Activated naive CD4-positive, alpha-beta T cell treated with anti-CD3 and anti-CD28 coated beads, Interleukin-2, amount 10 ng/mL, durations not matched to agents 7 days and 5 days (primary cell): ENCODE measurements at regions of chr2 and their contacts with region 1.

Region 1: DNA sequence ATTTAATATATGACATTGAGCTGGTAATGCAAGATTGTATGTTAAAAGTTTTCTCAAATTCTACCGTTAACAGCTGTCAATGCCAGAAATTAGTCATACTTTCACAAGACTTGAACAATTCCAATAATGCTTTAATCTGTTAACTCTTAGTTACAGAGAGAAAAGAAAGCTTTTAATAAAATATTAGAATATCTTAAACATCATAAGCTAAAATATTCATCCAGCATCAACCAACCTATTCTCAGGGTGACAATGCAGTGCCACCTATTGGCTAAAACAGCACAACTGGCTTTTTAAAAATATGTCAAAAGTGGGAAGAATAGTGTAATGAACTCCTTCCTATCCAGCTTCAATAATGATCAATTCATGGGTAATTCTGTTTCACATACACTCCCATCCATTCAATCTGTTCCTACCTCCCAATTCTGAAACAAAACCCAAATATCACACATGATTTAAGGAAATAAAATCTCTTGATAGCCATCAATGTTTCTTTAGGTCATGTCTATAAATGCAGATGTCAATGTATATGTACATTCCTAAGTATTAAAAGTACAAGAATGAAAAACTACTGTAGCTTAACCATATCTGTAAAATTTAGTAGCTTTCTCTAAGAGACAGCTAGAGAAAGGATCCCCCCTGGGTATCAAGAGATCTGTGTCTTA is 79.8 kb upstream of the CCDC141 start:
- DNase-seq: peak; percentile 39
- H3K4me3 Mint-ChIP-seq: no peak overlapping the region
- H3K27ac Mint-ChIP-seq: no peak overlapping the region
- H3K4me1 Mint-ChIP-seq: no peaks in the 10 kb centered on the region
- H3K27me3 Mint-ChIP-seq: no peaks in the 10 kb centered on the region

Region 2: DNA sequence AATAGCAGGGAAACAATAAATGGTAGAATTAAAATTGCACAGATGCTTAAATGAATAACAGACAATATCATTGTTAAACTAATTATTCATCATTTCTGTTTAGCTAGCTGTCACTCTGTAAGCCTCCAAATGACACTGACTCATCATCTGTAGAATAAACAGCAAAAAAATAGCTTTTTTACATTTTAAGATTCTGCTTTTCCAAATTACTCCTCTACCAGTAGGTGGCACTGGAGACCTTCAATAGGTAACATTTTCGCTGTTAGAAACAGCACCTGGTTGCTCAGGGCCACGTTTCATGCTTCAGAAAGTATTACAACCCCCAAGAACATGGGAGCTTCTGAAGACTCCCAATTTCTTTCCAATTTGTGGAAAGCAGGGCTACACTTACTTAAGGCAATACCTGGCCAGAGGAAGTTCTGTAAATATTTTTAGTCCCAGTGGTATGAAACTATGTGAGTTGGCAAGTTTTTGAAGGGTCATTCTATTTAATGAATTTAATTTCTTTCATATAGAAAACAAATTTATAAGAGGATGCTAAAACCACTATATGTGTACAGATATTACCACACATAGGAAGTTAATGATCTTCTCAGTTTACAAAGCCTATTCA is 367.8 kb before region 1 on chr2:
- CTCF ChIA-PET with region 1: interaction called, 16 read pairs
- DNase-seq: peak; percentile 47
- H3K4me3 Mint-ChIP-seq: no peak overlapping the region
- H3K27ac Mint-ChIP-seq: no peak overlapping the region
- H3K4me1 Mint-ChIP-seq: peaks cover 3% of the 10 kb centered on the region
- H3K27me3 Mint-ChIP-seq: no peaks in the 10 kb centered on the region

Region 3: GRCh38 chr2:178796079-178796677 is 333.5 kb before region 1 on chr2:
- CTCF ChIA-PET with region 1: interaction called, 17 read pairs
- DNase-seq: no peak
- H3K4me3 Mint-ChIP-seq: no peak overlapping the region
- H3K27ac Mint-ChIP-seq: no peak overlapping the region
- H3K4me1 Mint-ChIP-seq: peaks cover 3% of the 10 kb centered on the region
- H3K27me3 Mint-ChIP-seq: no peaks in the 10 kb centered on the region

Region 4: GRCh38 chr2:178891265-178891958 is 238.3 kb before region 1 on chr2:
- CTCF ChIA-PET with region 1: interaction called, 53 read pairs
- DNase-seq: peak; percentile 79
- H3K4me3 Mint-ChIP-seq: no peak overlapping the region
- H3K27ac Mint-ChIP-seq: no peak overlapping the region
- H3K4me1 Mint-ChIP-seq: no peaks in the 10 kb centered on the region
- H3K27me3 Mint-ChIP-seq: no peaks in the 10 kb centered on the region

Region 5: DNA sequence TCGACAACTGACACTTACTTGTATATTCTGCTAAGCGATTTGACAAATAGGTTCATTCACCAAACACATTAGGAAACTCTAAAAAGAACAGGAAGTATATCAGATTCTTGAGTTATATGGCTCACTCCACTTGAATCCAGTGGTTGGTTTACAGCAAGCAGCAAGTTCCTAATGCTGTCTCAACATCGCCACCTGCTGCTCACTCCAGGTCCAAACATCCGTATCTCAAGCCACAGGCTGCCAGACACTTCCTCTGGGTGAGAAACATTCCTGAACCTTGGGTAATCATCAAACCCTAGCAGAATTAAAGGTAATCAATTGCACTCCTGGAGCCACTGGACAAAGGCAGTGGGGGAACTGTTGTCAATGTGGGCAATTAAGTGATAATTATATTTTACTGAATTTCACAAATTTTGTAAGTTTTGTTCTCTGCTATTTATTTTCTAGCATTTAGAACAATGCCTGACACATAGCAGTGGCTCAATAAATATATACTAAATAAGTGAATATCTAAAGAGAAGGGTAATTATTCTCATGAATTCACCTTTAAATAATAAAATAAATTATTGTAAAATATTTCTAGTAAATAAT is 215.4 kb before region 1 on chr2:
- CTCF ChIA-PET with region 1: interaction called, 21 read pairs
- DNase-seq: peak; percentile 82
- H3K4me3 Mint-ChIP-seq: no peak overlapping the region
- H3K27ac Mint-ChIP-seq: no peak overlapping the region
- H3K4me1 Mint-ChIP-seq: peaks cover 11% of the 10 kb centered on the region
- H3K27me3 Mint-ChIP-seq: no peaks in the 10 kb centered on the region

Region 6: DNA sequence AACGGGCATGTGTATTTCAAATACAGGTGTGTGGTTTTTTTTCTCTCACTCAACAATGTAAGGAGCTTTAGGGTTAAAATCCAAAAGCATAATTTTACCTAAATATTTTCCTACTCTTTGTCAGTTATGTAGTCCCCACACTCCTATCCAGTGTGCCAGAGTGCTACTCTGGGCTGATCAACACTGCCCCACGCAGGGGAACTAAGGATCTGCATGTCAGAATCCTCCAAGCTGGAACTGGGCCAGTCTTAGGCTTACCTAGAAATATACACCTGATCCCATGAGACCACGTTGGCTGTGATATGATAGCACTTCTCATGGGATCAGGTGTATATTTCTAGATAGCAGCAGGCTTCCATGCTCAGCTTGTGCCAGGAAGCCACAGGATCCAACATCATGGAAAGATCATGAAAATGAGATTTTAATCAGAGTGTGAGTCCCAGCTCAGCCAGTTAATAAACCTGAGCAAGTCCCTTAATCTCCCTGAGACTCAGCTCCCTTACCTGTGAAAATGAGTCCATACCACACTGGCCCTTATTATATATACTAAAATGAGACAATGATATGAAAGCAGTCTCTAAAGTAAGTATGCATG is 109.5 kb before region 1 on chr2:
- CTCF ChIA-PET with region 1: interaction called, 15 read pairs
- DNase-seq: peak; percentile 61
- H3K4me3 Mint-ChIP-seq: no peak overlapping the region
- H3K27ac Mint-ChIP-seq: no peak overlapping the region
- H3K4me1 Mint-ChIP-seq: peaks cover 23% of the 10 kb centered on the region
- H3K27me3 Mint-ChIP-seq: no peaks in the 10 kb centered on the region

Region 7: DNA sequence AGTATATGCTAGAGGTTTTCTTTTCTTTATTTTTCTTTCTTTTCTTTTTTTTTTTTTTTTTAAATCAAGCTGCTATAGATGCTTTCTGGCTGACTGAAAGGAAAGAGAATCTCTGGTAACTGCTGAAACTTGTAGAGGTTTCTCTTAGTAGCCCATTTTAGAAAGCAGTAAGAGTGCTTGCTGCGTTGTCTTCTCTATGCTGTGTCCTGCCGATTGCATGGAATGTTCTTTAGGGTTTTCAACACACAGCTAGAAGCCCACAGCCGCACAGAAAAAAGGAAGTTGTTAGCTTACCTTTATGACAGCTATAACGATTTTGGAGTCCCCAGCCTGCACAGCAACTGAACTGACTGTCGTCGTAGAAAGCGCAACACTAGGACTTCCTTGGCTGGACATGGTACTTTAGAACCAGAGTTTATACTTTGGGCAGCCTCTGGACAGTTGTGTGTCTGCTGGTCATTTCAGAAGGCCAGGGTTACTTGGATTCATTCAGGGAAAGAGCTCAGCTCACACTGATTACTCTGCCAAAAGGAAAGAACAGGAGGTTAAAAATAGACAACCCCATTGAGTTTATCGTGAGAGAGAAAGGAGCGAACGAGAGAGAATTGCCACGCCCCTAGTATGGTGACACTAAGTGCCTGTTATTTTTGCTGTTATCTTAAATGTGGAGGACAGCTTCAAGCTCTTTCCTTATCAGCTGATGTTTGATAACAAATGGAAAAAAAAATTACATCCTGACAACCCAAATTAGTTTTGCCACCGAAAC is 80.0 kb before region 1 on chr2 and contains the start of gene CCDC141:
- CTCF ChIA-PET with region 1: interaction called, 11 read pairs
- DNase-seq: peak; percentile 44
- H3K4me3 Mint-ChIP-seq: peak within 1 kb of the TSS; percentile 81
- H3K27ac Mint-ChIP-seq: peak within 1 kb of the TSS; percentile 91
- H3K4me1 Mint-ChIP-seq: peaks cover 57% of the 10 kb centered on the region
- H3K27me3 Mint-ChIP-seq: no peaks in the 10 kb centered on the region